ENCODE measurements at regions of chr15 and their contacts with region 1.

Region 1: GRCh38 chr15:77633134-77633912 is 611 bp upstream of the LINGO1 start:
- DNase-seq: peak; percentile 86 to 92 (median 90)
- ATAC-seq: peak; percentile 95
- H3K4me3 ChIP-seq: peak overlapping the region; percentile 43
- H3K27ac ChIP-seq: peak overlapping the region; percentile 75
- H3K4me1 ChIP-seq: peaks cover 25 to 55% of the 10 kb centered on the region in 2 experiments; a peak in 4 of 5 replicates
- H3K27me3 ChIP-seq: peaks cover 11 to 28% of the 10 kb centered on the region in 2 experiments; a peak in 4 of 5 replicates
- CTCF ChIP-seq: peak; percentile 100
- EP300 ChIP-seq: no peak
- POLR2A ChIP-seq: peak; percentile 74
- RAD21 ChIP-seq: peak; percentile 80 to 95

Region 2: DNA sequence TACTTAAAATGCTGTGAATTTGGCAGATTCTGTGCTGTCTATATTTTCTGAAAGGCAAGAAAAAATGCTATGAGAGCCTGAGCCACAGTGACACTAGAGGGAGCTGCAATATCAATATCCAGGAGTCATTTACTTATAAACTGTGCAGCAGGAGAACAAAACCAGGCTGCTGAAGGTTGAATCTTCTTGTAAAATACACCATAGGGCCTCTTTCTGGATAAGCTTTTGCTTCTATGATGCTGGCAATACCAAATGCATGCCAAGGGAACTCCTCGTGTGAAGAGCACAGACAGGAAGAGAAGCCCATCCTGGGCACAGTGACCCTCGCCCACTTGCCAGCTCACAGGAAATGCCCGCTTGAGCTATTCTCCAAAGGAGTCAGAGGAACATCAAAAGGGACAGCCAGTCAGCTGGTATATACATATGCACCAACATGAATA is 514.4 kb before region 1 on chr15:
- CTCF ChIA-PET with region 1: interaction called, 11 read pairs
- POLR2A ChIA-PET with region 1: no interaction called
- in situ Hi-C with region 1: no loop called
- intact Hi-C with region 1: no loop called
- DNase-seq: peak in 2 of 4 experiments; percentile 37 to 55
- ATAC-seq: peak; percentile 69
- H3K4me3 ChIP-seq: no peak overlapping the region
- H3K27ac ChIP-seq: no peak overlapping the region
- H3K4me1 ChIP-seq: no peaks in the 10 kb centered on the region
- H3K27me3 ChIP-seq: no peaks in the 10 kb centered on the region
- CTCF ChIP-seq: peak; percentile 34 to 76 (median 57); a peak in 5 of 6 replicates
- EP300 ChIP-seq: no peak
- POLR2A ChIP-seq: no peak
- RAD21 ChIP-seq: peak; percentile 37 to 72; a peak in 3 of 4 replicates

Region 3: DNA sequence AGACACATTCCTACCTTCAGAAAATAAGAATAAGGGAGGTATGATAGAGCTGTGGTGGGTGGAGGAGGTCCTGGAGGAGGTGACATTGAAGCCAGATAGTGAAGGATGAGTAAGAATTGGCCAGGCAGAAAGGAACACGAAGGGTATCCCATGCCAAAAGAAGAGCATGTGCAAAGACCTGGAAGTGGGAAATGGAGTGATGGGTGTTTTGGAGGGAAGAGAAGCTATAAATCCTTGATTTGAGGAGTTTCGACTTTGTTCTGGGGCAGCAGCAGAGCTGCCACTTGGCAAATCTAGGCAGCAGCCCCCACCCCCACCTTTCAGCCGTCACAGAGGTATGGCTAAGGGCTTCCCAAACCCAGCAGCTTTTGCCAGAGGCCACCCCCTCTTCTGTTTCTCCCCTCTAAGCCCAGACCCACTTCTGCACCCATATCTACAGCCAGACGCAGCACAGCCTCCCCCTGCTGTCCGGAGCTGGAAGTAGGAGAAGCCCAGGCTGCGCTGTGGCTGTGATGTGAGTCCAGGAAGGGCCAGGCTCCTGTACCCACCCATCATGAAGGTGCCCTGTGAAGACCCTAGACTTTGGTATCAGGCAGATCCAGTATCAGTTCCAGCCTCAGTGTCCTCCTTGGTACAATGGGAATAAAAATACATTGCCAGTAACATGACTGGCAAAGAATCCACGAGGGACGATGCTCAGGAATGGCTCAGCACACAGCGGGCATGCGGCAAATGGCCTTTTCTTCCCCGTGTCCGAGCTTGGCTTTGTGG is 188.1 kb after region 1 on chr15:
- CTCF ChIA-PET with region 1: interaction called, 97 read pairs
- POLR2A ChIA-PET with region 1: interaction called, 6 read pairs
- in situ Hi-C with region 1: no loop called
- intact Hi-C with region 1: loop called (anchors 1 kb)
- DNase-seq: peak; percentile 75 to 78 (median 76)
- ATAC-seq: peak; percentile 92
- H3K4me3 ChIP-seq: no peak overlapping the region
- H3K27ac ChIP-seq: no peak overlapping the region
- H3K4me1 ChIP-seq: peaks cover 0 to 26% of the 10 kb centered on the region in 2 experiments; a peak in 2 of 5 replicates
- H3K27me3 ChIP-seq: peaks cover 9 to 70% of the 10 kb centered on the region in 2 experiments; a peak in 4 of 5 replicates
- CTCF ChIP-seq: peak; percentile 87 to 92 (median 91)
- EP300 ChIP-seq: no peak
- POLR2A ChIP-seq: no peak
- RAD21 ChIP-seq: peak; percentile 58 to 89

Region 4: GRCh38 chr15:77870195-77871065 is 237.1 kb after region 1 on chr15:
- CTCF ChIA-PET with region 1: interaction called, 3 read pairs
- POLR2A ChIA-PET with region 1: no interaction called
- in situ Hi-C with region 1: no loop called
- intact Hi-C with region 1: loop called (anchors 5 kb)
- DNase-seq: peak; percentile 68 to 77 (median 74)
- ATAC-seq: peak; percentile 92
- H3K4me3 ChIP-seq: no peak overlapping the region
- H3K27ac ChIP-seq: no peak overlapping the region
- H3K4me1 ChIP-seq: peaks cover 0 to 16% of the 10 kb centered on the region in 2 experiments; a peak in 2 of 5 replicates
- H3K27me3 ChIP-seq: peaks cover 0 to 47% of the 10 kb centered on the region in 2 experiments; a peak in 3 of 5 replicates
- CTCF ChIP-seq: peak; percentile 75 to 91 (median 82)
- EP300 ChIP-seq: no peak
- POLR2A ChIP-seq: no peak
- RAD21 ChIP-seq: peak in 1 of 2 experiments; percentile 45; a peak in 2 of 4 replicates

Measured in K562 (cell line).